ENCODE measurements at regions of chr16 and their contacts with region 1.

Region 1: DNA sequence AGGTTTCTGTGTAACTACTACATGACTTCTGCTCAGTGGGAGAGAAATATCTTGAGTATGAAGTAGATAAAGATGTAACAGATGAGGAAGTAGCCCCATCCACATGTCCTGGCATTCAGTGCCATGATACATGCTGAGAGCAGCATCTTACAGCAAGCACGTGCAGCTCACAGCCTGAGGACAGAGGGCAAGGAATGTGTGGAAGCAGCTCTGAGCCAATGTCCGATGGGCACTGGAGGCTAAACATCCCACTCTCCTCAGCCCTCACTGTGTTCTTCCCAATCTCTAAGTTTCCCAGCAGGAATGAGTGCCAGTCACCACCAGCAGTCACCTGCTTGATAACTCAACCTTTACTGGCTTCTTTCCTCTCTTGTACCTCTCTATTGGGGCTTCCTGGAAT is 40.4 kb downstream of the CFDP1 start:
- DNase-seq: no peak
- H3K4me3 ChIP-seq: no peak overlapping the region
- H3K27me3 ChIP-seq: no peaks in the 10 kb centered on the region
- CTCF ChIP-seq: no peak

Region 2: GRCh38 chr16:75286389-75286788 is 106.5 kb before region 1 on chr16:
- CTCF ChIA-PET with region 1: interaction called, 3 read pairs
- POLR2A ChIA-PET with region 1: interaction called, 22 read pairs
- DNase-seq: no peak
- H3K4me3 ChIP-seq: no peak overlapping the region
- H3K27me3 ChIP-seq: no peaks in the 10 kb centered on the region
- CTCF ChIP-seq: no peak

Region 3: DNA sequence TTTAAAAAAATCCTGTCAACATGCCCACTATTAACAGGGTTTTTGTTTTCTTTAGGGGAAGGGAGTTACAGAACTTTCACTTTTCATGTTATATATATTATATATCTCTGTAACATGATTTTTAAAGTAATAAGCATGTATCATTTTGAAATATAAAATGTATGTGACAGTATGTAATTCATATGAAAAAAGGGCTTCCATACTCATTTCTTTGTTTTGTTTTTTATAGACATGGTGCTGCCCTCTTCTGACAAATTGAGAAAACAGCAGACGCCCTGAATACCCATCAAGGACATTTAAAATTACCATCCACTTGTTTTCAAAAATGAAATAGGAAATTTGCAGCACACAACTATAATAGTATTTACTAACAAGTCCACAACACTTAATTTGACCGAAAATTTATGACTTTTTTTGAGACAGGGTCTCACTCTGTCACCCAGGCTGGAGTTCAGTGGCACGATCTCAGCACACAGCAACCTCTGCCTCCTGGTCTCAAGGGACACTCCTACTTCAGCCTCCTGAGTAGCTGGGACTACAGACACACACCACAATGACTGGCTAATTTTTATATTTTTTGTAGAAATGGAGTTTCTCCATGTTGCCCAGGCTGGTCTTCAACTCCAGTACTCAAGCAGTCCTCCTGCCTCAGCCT is 10.0 kb after region 1 on chr16:
- CTCF ChIA-PET with region 1: interaction called, 19 read pairs
- POLR2A ChIA-PET with region 1: no interaction called
- DNase-seq: no peak
- H3K4me3 ChIP-seq: no peak overlapping the region
- H3K27me3 ChIP-seq: no peaks in the 10 kb centered on the region
- CTCF ChIP-seq: peak; percentile 64

Measured in BJ (cell line).